Activated CD4-positive, alpha-beta T cell treated with anti-CD3 and anti-CD28 coated beads for 36 hours (primary cell): ENCODE measurements at regions of chr9 and their contacts with region 1.

Region 1: DNA sequence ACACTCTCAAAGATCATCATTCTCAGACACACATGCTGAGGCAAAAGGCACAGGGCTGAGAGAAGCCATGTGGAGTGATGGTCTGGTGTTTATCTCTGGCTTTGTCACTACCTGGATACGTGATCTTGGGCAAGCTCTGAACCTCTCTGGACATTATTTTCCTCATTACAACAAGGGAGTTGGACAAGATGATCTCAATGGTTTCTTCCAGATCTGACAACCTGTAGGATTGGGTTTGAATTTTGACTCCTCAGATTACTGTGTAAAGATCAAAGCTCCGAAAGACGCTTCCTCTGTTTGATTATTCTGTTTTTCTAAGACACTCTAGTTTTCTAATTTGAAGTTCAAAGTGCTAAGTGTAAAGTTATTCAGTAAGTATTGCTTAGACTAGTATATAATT is 20.0 kb downstream of the NUDT2 start:
- DNase-seq: no peak
- ATAC-seq: no peak
- H3K4me3 Mint-ChIP-seq: no peak overlapping the region
- H3K27ac Mint-ChIP-seq: no peak overlapping the region
- H3K4me1 Mint-ChIP-seq: no peaks in the 10 kb centered on the region
- H3K27me3 Mint-ChIP-seq: no peaks in the 10 kb centered on the region

Region 2: GRCh38 chr9:34338665-34339385 is 10.5 kb before region 1 on chr9:
- CTCF ChIA-PET with region 1: no interaction called
- POLR2A ChIA-PET with region 1: no interaction called
- intact Hi-C with region 1: loop called in 1 of 2 experiments (anchors 1 kb)
- DNase-seq: no peak
- ATAC-seq: no peak
- H3K4me3 Mint-ChIP-seq: no peak overlapping the region
- H3K27ac Mint-ChIP-seq: no peak overlapping the region
- H3K4me1 Mint-ChIP-seq: peaks cover 17% of the 10 kb centered on the region
- H3K27me3 Mint-ChIP-seq: no peaks in the 10 kb centered on the region